ENCODE measurements at regions of chr3 and their contacts with region 1.

Region 1: DNA sequence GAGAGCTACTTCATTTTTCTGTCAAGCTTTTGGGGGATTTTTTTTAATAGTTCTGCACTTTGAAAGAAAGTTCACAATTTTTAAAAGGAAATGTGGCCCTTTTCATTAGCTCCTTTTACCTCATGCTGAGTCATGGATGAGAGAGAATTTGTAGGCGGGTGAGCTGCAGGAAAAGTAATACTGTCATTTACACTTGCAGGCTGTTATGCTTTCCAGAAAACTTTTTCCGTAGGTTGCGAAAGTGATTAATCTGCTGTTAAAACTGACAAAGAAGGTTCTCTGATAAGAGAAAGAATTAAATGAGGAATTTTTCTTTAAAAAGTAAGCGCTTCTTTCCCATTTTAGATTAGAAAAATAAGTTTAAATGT is 430.2 kb downstream of the LPP start:
- DNase-seq: no peak
- ATAC-seq: no peak
- H3K4me3 ChIP-seq: peak overlapping the region in 1 of 5 experiments; percentile 13
- H3K4me3 Mint-ChIP-seq: no peak overlapping the region
- H3K27ac ChIP-seq: peak overlapping the region; percentile 6 to 73
- H3K27ac Mint-ChIP-seq: no peak overlapping the region
- H3K4me1 ChIP-seq: peaks cover 49 to 53% of the 10 kb centered on the region in 2 donors
- H3K4me1 Mint-ChIP-seq: peaks cover 32% of the 10 kb centered on the region
- H3K27me3 ChIP-seq: no peaks in the 10 kb centered on the region
- H3K27me3 Mint-ChIP-seq: no peaks in the 10 kb centered on the region
- CTCF ChIP-seq: no peak

Region 2: GRCh38 chr3:188432802-188433520 is 151.2 kb before region 1 on chr3:
- CTCF ChIA-PET with region 1: no interaction called
- POLR2A ChIA-PET with region 1: interaction called, 11 read pairs
- intact Hi-C with region 1: loop called (anchors 5 kb)
- DNase-seq: peak; percentile 75
- ATAC-seq: peak; percentile 85
- H3K4me3 ChIP-seq: peak overlapping the region in 2 of 5 experiments; percentile 25 to 39
- H3K4me3 Mint-ChIP-seq: peak overlapping the region; percentile 81
- H3K27ac ChIP-seq: peak overlapping the region; percentile 95 to 99
- H3K27ac Mint-ChIP-seq: peak overlapping the region; percentile 98
- H3K4me1 ChIP-seq: peaks cover 57 to 83% of the 10 kb centered on the region in 2 donors
- H3K4me1 Mint-ChIP-seq: peaks cover 81% of the 10 kb centered on the region
- H3K27me3 ChIP-seq: no peaks in the 10 kb centered on the region
- H3K27me3 Mint-ChIP-seq: no peaks in the 10 kb centered on the region
- CTCF ChIP-seq: no peak

Region 3: DNA sequence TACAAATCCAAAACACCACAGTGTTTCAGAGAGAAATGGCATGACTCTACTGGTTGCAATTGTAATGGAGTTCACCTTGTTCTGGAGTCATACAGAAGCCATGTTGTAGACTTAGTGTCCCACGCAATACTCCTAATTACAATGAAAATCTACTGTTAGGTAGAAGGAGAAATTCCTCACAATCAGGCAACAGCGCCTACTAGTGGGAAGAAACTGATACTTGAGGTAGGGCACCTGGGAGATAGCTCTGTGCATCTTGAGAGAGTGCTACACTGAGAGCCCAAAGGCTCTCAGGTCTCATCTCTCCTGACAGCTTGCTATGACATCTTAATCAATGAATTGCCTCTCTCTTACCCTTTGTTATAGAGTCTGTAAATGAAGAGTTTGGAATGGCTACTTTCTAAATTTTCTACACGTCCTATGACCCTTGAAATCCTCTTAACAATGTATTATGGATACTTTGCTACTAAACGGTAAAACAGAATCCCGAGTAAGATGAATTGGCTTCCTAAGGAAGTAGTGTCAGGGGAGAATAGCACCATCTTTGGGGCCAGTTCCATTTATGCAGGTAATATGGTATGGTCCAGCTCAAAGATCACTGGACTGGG is 165.0 kb after region 1 on chr3:
- CTCF ChIA-PET with region 1: no interaction called
- POLR2A ChIA-PET with region 1: no interaction called
- intact Hi-C with region 1: loop called (anchors 10 kb)
- DNase-seq: peak; percentile 65
- ATAC-seq: no peak
- H3K4me3 ChIP-seq: no peak overlapping the region
- H3K4me3 Mint-ChIP-seq: no peak overlapping the region
- H3K27ac ChIP-seq: no peak overlapping the region
- H3K27ac Mint-ChIP-seq: no peak overlapping the region
- H3K4me1 ChIP-seq: peaks cover 18 to 20% of the 10 kb centered on the region in 2 donors
- H3K4me1 Mint-ChIP-seq: peaks cover 22% of the 10 kb centered on the region
- H3K27me3 ChIP-seq: no peaks in the 10 kb centered on the region
- H3K27me3 Mint-ChIP-seq: no peaks in the 10 kb centered on the region
- CTCF ChIP-seq: peak; percentile 76

Measured in B cell (primary cell).